ENCODE measurements at regions of chr22 and their contacts with region 1.

Region 1: GRCh38 chr22:30541961-30542810 is 4.4 kb downstream of the SEC14L6 start:
- DNase-seq: no peak
- ATAC-seq: peak; percentile 71
- H3K4me3 ChIP-seq: no peak overlapping the region
- H3K27ac ChIP-seq: no peak overlapping the region
- H3K4me1 ChIP-seq: peaks cover 2% of the 10 kb centered on the region; the same call in 1 of the 2 replicates
- H3K27me3 ChIP-seq: peaks cover 41% of the 10 kb centered on the region
- CTCF ChIP-seq: no peak
- POLR2A ChIP-seq: no peak
- RAD21 ChIP-seq: no peak

Region 2: GRCh38 chr22:30474683-30475424 is 67.3 kb before region 1 on chr22:
- CTCF ChIA-PET with region 1: no interaction called
- POLR2A ChIA-PET with region 1: no interaction called
- dilution Hi-C with region 1: no loop called
- in situ Hi-C with region 1: no loop called
- intact Hi-C with region 1: no loop called
- DNase-seq: no peak
- ATAC-seq: no peak
- H3K4me3 ChIP-seq: no peak overlapping the region
- H3K27ac ChIP-seq: no peak overlapping the region
- H3K4me1 ChIP-seq: no peaks in the 10 kb centered on the region
- H3K27me3 ChIP-seq: peaks cover 67% of the 10 kb centered on the region
- CTCF ChIP-seq: no peak
- POLR2A ChIP-seq: no peak
- RAD21 ChIP-seq: no peak

Region 3: GRCh38 chr22:30564761-30565119 is 22.6 kb after region 1 on chr22:
- CTCF ChIA-PET with region 1: no interaction called
- POLR2A ChIA-PET with region 1: no interaction called
- dilution Hi-C with region 1: no loop called
- in situ Hi-C with region 1: no loop called
- intact Hi-C with region 1: loop called (anchors 1 kb)
- DNase-seq: no peak
- ATAC-seq: no peak
- H3K4me3 ChIP-seq: no peak overlapping the region
- H3K27ac ChIP-seq: no peak overlapping the region
- H3K4me1 ChIP-seq: no peaks in the 10 kb centered on the region
- H3K27me3 ChIP-seq: peaks cover 50% of the 10 kb centered on the region
- CTCF ChIP-seq: no peak
- POLR2A ChIP-seq: no peak
- RAD21 ChIP-seq: no peak